ENCODE measurements at regions of chr17 and their contacts with region 1.

Region 1: DNA sequence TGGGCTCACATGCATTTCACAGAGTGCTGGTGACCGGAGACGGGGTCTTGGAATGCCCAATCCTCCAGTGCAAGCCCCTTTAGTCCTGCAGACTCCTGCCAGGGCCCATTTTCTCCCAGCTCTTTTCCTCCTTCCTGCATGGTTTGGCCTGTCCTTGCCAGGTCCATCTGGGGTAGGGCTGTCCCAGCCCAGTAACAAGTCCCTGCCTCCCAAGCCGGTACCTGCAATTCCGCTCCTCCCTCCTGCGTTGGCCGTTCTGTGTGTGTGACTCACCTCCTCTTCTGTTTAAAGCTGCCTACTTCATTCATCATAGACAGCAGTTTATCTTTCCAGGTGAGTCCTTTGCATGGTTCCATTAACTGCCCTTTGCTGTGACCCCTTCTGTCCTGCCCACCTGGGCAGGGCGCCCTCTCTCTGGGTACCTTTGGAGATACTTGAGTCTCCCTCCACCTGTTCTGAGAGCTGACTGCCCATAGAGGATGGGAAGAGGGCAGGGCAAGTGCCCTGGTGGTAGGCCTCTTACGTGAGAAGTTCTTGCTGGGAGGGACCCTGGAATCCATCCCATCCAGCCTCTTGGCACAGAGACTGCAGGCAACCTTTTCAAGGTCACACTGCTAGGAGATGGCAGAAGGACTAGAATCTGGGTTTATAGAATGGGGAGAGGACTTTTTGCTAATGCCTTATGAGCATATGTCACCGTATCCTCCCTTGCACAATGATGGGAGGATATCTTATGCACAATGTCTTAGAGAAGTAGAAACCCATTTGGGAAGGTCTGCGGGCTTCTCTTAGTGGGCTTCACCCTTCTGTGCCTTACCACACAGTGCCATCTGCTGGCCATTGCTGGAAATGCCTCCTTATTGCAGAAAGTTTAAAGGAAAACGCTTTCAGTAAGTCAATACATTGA is 29.7 kb upstream of the LGALS9 start:
- DNase-seq: peak; percentile 90 to 94
- H3K4me3 ChIP-seq: no peak overlapping the region
- H3K4me3 Mint-ChIP-seq: no peak overlapping the region
- H3K27ac Mint-ChIP-seq: peak overlapping the region; percentile 11
- H3K4me1 ChIP-seq: no peaks in the 10 kb centered on the region
- H3K4me1 Mint-ChIP-seq: peaks cover 6% of the 10 kb centered on the region
- H3K27me3 ChIP-seq: no peaks in the 10 kb centered on the region
- H3K27me3 Mint-ChIP-seq: no peaks in the 10 kb centered on the region
- CTCF ChIP-seq: peak; percentile 99 to 100

Region 2: DNA sequence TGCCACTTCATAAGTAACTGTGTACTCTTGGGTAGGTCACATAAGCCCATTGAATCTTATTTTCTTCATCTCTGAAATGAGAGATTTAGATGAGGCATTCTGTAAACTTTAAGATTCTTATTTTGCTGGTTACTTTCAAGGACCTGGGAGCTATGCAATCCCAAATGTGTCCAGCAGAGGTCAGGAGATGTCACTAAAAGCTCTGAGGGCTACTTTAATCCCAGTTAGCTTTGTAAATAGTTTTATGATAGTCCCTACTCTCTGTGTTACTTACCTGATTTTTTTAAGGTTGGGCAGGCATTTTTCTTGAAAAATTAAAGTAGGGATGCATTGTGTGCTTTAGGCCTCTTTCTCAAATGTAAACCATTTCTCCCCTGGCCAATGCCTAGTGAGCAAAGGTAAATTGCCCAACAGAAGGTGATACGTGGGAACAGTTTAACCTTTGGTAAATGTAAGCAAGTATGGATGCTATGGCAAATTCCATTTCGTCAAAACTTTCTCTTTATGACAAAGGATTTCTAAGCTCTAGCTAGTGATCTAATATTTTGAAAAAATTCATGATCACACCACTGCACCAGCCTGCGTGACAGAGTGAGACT is 364.5 kb before region 1 on chr17:
- CTCF ChIA-PET with region 1: interaction called, 17 read pairs
- POLR2A ChIA-PET with region 1: no interaction called
- intact Hi-C with region 1: loop called (anchors 2 kb)
- DNase-seq: peak; percentile 69 to 75
- H3K4me3 ChIP-seq: no peak overlapping the region
- H3K4me3 Mint-ChIP-seq: no peak overlapping the region
- H3K27ac Mint-ChIP-seq: no peak overlapping the region
- H3K4me1 ChIP-seq: peaks cover 27% of the 10 kb centered on the region
- H3K4me1 Mint-ChIP-seq: peaks cover 6% of the 10 kb centered on the region
- H3K27me3 ChIP-seq: no peaks in the 10 kb centered on the region
- H3K27me3 Mint-ChIP-seq: no peaks in the 10 kb centered on the region
- CTCF ChIP-seq: peak; percentile 89 to 94

Region 3: GRCh38 chr17:27353461-27354050 is 247.8 kb before region 1 on chr17:
- CTCF ChIA-PET with region 1: interaction called, 5 read pairs
- POLR2A ChIA-PET with region 1: no interaction called
- intact Hi-C with region 1: loop called (anchors 1 kb)
- DNase-seq: peak; percentile 94 to 96
- H3K4me3 ChIP-seq: peak overlapping the region; percentile 93
- H3K4me3 Mint-ChIP-seq: peak overlapping the region; percentile 98
- H3K27ac Mint-ChIP-seq: peak overlapping the region; percentile 99
- H3K4me1 ChIP-seq: peaks cover 9% of the 10 kb centered on the region; the same call in 1 of the 2 replicates
- H3K4me1 Mint-ChIP-seq: no peaks in the 10 kb centered on the region
- H3K27me3 ChIP-seq: no peaks in the 10 kb centered on the region
- H3K27me3 Mint-ChIP-seq: no peaks in the 10 kb centered on the region
- CTCF ChIP-seq: peak; percentile 55 to 96

Region 4: GRCh38 chr17:27455914-27456680 is 145.2 kb before region 1 on chr17 and contains the start of gene KSR1:
- CTCF ChIA-PET with region 1: interaction called, 95 read pairs
- POLR2A ChIA-PET with region 1: interaction called, 3 read pairs
- intact Hi-C with region 1: loop called (anchors 1 kb)
- DNase-seq: peak; percentile 95 to 98
- H3K4me3 ChIP-seq: peak within 1 kb of the TSS; percentile 79
- H3K4me3 Mint-ChIP-seq: peak within 1 kb of the TSS; percentile 89
- H3K27ac Mint-ChIP-seq: peak within 1 kb of the TSS; percentile 76
- H3K4me1 ChIP-seq: peaks cover 30% of the 10 kb centered on the region
- H3K4me1 Mint-ChIP-seq: peaks cover 38% of the 10 kb centered on the region
- H3K27me3 ChIP-seq: no peaks in the 10 kb centered on the region
- H3K27me3 Mint-ChIP-seq: no peaks in the 10 kb centered on the region
- CTCF ChIP-seq: peak; percentile 90 to 99
- total RNA-seq, gene KSR1: 88.9 and 91.5 TPM in 2 replicates

Region 5: DNA sequence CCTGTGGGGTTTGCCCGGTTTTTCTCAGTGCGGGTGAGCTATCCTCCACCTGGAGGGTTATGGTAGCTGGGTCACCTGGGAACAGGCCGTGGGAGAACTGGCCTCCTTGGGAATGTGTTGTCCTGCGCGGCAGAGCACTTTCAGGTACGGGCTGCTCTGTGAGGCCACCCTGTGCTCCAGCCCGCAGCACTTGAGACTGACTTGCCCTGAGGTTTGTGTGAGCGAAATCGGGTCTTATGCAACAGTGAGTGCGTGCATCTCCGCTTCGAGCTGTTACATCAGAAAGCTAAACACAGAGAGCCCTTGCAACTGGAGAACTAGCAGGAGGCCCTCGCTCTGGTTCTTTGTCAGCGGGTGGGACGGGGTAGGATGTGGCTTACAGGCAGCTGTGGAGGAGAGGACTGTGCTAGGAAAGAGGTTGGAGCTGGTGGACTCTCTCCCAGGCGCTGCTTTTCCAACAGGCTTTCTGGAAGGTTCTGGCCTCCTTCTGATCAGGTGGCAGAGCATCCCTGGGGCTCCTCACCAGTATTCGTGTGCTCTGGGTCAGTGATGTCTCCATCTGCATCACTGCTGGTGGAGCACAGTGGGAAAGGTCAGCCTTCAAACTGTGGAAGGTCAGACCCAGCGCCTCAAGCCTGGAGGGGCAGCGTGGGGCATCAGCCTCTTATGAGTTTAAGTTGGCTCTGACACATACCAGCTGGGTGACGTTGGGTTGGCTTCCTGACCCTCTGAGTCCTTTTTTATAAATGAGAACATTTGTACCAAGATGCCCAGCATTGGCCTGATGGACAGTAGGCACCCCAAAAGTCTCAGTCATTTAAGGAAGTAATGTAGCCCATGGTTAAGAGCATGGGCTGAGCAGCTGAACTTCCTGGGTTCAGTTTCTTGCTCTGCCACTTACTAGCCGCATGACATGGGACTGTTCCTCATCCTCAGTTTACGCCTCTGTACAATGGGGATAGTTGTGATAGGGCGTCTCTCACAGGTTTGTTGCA is 68.8 kb before region 1 on chr17:
- CTCF ChIA-PET with region 1: interaction called, 5 read pairs
- POLR2A ChIA-PET with region 1: interaction called, 3 read pairs
- intact Hi-C with region 1: loop called (anchors 5 kb)
- DNase-seq: peak; percentile 78 to 85
- H3K4me3 ChIP-seq: no peak overlapping the region
- H3K4me3 Mint-ChIP-seq: peak overlapping the region; percentile 15
- H3K27ac Mint-ChIP-seq: peak overlapping the region; percentile 90
- H3K4me1 ChIP-seq: peaks cover 65% of the 10 kb centered on the region
- H3K4me1 Mint-ChIP-seq: peaks cover 75% of the 10 kb centered on the region
- H3K27me3 ChIP-seq: no peaks in the 10 kb centered on the region
- H3K27me3 Mint-ChIP-seq: no peaks in the 10 kb centered on the region
- CTCF ChIP-seq: no peak

Region 6: GRCh38 chr17:27578718-27579085 is 22.6 kb before region 1 on chr17:
- CTCF ChIA-PET with region 1: interaction called, 16 read pairs
- POLR2A ChIA-PET with region 1: interaction called, 3 read pairs
- intact Hi-C with region 1: loop called (anchors 2 kb)
- DNase-seq: peak; percentile 57 to 77
- H3K4me3 ChIP-seq: no peak overlapping the region
- H3K4me3 Mint-ChIP-seq: no peak overlapping the region
- H3K27ac Mint-ChIP-seq: peak overlapping the region; percentile 89
- H3K4me1 ChIP-seq: peaks cover 68% of the 10 kb centered on the region
- H3K4me1 Mint-ChIP-seq: peaks cover 59% of the 10 kb centered on the region
- H3K27me3 ChIP-seq: no peaks in the 10 kb centered on the region
- H3K27me3 Mint-ChIP-seq: no peaks in the 10 kb centered on the region
- CTCF ChIP-seq: no peak

Region 7: DNA sequence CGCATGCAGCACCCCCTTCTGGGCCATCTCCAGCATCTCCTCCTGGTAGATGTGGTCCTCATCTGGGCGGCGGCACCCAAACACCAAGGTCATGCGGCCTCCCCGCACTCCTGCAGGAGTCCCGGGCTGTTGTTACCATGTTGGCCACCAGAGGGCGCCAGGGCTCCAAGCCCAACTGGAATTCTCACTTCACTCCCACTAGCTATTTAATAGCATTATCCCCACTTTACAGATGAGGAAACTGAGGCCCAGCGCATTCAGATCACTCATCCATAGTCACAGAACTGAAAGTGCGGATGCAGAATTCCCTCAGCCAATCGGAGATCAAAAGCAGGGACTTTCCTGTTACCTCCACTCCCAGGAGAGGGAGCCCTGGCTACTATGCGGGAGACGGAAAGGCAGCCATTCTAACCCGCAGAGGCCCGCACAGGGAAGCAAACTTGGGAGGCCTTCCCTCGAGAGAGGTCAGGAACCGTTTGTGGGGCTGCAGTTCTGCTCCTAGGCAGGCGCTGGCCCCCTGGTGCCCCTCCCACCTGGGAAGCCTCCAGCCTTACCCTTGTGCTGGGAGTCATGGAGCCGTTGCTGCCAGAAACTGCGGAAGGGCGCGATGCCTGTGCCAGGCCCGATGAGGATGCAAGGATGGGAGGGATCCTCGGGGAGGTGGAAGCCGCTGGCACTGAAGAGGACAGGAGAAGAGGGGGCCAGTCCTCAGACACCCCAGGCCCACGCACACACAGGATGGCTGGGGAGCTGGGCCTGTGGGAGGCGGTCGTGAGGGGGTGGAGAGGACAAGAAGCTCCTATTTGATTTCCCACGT is 159.0 kb after region 1 on chr17:
- CTCF ChIA-PET with region 1: interaction called, 7 read pairs
- POLR2A ChIA-PET with region 1: no interaction called
- intact Hi-C with region 1: loop called (anchors 1 kb)
- DNase-seq: peak; percentile 85 to 92
- H3K4me3 ChIP-seq: no peak overlapping the region
- H3K4me3 Mint-ChIP-seq: no peak overlapping the region
- H3K27ac Mint-ChIP-seq: no peak overlapping the region
- H3K4me1 ChIP-seq: no peaks in the 10 kb centered on the region
- H3K4me1 Mint-ChIP-seq: no peaks in the 10 kb centered on the region
- H3K27me3 ChIP-seq: no peaks in the 10 kb centered on the region
- H3K27me3 Mint-ChIP-seq: no peaks in the 10 kb centered on the region
- CTCF ChIP-seq: peak; percentile 97 to 100

Measured in Caco-2 (cell line).